ENCODE measurements at regions of chr7 and their contacts with region 1.

Region 1: DNA sequence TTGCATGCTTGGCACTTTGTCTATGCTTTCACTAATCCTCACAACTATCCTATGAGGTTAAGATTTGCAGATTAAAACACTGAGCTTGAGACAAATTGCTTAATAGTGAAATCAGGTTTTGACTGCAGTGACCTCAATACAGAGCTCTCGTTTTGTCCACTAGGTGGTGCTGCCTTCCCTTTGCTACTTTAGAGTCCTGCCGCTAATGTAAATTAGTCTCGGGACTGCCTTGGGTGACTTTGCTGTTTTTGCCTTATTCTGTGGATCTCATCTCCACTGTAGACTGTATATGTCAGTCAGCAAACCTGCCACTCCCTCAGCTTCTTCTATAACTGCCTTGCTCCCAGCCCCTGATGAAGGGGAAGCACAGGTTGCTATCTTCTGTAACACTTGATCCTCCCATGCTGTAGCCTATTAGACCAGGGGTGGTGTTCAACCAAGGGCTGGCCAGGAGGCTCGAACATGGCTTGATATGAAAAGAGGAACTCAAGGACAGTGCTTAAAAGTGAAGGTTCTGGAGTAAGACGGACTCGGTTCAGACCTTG is 26.0 kb downstream of the ASB4 start:
- DNase-seq: peak in 1 of 2 experiments; percentile 73
- H3K4me3 ChIP-seq: no peak overlapping the region
- H3K27ac ChIP-seq: no peak overlapping the region
- H3K4me1 ChIP-seq: peaks cover 0 to 4% (median 0%) of the 10 kb centered on the region in 4 experiments; a peak in 1 of 7 replicates
- H3K27me3 ChIP-seq: no peaks in the 10 kb centered on the region
- CTCF ChIP-seq: peak; percentile 8 to 87 (median 74)
- EP300 ChIP-seq: no peak
- POLR2A ChIP-seq: no peak
- RAD21 ChIP-seq: peak; percentile 74 to 77

Region 2: DNA sequence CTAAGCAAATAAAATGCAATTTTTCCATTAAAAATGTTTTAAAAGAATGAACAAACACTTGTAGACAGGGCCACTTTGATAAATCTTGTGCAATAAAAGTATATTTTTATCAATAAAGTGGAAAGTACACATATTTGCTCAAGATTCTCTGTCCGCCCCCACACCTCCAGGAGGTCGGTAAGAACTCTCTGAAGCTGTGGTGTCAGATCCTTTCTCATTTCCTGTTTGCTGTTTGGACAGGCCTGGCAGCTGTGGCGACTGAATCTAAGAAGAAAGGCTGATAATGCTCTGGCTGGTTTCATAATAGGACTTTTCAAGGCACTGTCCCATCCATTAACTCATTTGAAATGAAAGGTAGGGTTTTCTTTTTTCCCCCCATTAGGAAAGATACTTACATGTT is 41.3 kb before region 1 on chr7:
- CTCF ChIA-PET with region 1: no interaction called
- POLR2A ChIA-PET with region 1: no interaction called
- DNase-seq: no peak
- H3K4me3 ChIP-seq: no peak overlapping the region; a peak in 1 of 8 replicates
- H3K27ac ChIP-seq: no peak overlapping the region
- H3K4me1 ChIP-seq: peaks cover 0 to 5% (median 2%) of the 10 kb centered on the region in 4 experiments; a peak in 3 of 7 replicates
- H3K27me3 ChIP-seq: no peaks in the 10 kb centered on the region
- CTCF ChIP-seq: no peak
- EP300 ChIP-seq: no peak
- POLR2A ChIP-seq: no peak
- RAD21 ChIP-seq: no peak

Region 3: DNA sequence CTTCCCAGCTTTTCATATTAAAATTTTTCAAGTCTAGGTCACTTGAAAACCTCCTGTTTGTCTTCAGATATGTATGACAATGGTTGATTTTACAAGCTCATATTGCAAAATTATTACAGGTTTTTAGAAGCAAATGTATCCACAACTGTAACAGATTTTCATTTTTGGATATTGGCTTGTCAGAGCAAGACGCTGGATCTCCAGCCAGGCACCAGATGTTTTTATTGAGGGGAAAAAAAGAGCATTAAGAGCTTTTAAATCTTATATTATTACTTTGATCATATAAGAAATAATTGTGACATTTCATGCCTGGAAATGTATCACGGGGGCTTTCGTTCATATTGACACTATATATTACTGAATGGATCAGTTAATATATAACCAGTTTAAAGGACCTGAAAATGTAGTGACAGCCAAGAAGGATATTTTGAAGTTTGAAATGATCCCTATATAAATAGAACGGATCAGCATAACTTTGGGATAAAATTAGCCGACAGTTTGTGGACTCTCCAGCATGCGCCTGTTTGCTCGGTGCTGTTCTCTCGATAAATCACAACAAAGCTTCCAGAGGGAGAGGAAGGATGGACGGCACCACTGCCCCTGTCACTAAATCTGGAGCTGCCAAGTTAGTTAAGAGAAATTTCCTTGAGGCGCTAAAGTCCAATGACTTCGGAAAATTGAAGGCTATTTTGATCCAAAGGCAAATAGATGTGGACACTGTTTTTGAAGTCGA is 26.2 kb before region 1 on chr7 and contains the start of gene ASB4:
- CTCF ChIA-PET with region 1: interaction called, 29 read pairs
- POLR2A ChIA-PET with region 1: no interaction called
- DNase-seq: no peak
- H3K4me3 ChIP-seq: no peak within 1 kb of the TSS
- H3K27ac ChIP-seq: no peak within 1 kb of the TSS
- H3K4me1 ChIP-seq: no peaks in the 10 kb centered on the region
- H3K27me3 ChIP-seq: no peaks in the 10 kb centered on the region
- CTCF ChIP-seq: no peak
- EP300 ChIP-seq: no peak
- POLR2A ChIP-seq: no peak
- RAD21 ChIP-seq: no peak
- total RNA-seq, gene ASB4: not detected in 2 replicates

Region 4: DNA sequence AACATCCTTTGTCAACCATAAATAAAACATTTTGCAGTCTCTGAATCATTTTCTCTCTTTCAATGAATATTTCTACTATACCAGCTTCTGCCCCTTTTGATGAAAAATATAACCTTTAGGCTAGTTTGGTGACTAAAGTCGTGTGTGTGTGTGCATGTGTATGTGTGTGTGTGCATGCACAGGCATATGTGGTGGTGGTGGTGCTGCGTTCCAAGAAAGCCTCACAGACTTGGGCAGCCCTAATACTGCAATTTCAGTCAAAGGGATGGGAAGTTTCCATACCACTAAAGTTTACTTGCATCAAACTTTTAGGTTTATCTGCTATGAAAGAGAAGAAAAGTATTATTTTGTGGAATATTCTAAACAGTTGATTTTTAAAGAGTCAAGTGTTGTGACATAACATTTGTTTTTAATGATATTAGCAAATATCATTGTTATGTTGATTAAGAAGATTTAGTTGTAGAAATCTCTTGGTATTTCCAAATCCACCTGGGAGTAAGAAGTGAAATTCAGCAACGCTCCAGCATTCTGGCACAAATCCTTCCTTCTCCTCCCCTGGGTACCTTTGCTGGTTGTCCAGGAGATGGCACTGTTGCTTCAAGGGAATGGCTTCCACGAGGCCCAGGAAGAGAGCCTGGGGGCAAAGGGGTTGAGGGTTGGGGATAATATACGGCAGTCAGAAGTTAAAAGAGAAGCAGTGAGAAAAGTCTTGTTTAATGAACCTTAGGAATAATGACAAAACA is 15.4 kb after region 1 on chr7:
- CTCF ChIA-PET with region 1: interaction called, 44 read pairs
- POLR2A ChIA-PET with region 1: no interaction called
- DNase-seq: peak in 1 of 2 experiments; percentile 67
- H3K4me3 ChIP-seq: no peak overlapping the region
- H3K27ac ChIP-seq: no peak overlapping the region
- H3K4me1 ChIP-seq: no peaks in the 10 kb centered on the region
- H3K27me3 ChIP-seq: no peaks in the 10 kb centered on the region
- CTCF ChIP-seq: peak; percentile 83 to 94 (median 86)
- EP300 ChIP-seq: no peak
- POLR2A ChIP-seq: no peak
- RAD21 ChIP-seq: peak; percentile 98

Region 5: DNA sequence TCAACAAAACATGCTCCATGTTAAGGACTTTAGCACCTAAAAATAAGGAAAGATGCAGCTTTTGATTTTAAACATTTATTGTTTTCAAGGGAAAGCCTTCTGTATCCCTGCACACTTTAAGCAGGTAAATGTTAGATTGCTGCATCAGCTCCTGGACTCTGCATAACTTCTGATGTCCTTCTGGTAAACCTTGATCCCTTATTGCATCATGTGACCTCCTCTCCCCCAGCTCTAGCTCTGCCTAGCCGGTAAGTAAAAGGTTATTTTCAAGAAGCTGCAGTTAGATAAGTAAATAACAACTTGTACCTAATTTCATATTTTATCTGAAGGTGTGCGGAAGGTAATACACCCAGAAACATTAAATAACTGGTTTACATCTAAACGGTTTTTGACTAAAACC is 47.1 kb after region 1 on chr7:
- CTCF ChIA-PET with region 1: interaction called, 13 read pairs
- POLR2A ChIA-PET with region 1: no interaction called
- DNase-seq: no peak
- H3K4me3 ChIP-seq: no peak overlapping the region
- H3K27ac ChIP-seq: no peak overlapping the region
- H3K4me1 ChIP-seq: no peaks in the 10 kb centered on the region
- H3K27me3 ChIP-seq: peaks cover 0 to 2% (median 0%) of the 10 kb centered on the region in 4 experiments; a peak in 1 of 7 replicates
- CTCF ChIP-seq: no peak
- EP300 ChIP-seq: no peak
- POLR2A ChIP-seq: no peak
- RAD21 ChIP-seq: no peak